Mammary epithelial cell (primary cell): ENCODE measurements at regions of chr4 and their contacts with region 1.

Region 1: DNA sequence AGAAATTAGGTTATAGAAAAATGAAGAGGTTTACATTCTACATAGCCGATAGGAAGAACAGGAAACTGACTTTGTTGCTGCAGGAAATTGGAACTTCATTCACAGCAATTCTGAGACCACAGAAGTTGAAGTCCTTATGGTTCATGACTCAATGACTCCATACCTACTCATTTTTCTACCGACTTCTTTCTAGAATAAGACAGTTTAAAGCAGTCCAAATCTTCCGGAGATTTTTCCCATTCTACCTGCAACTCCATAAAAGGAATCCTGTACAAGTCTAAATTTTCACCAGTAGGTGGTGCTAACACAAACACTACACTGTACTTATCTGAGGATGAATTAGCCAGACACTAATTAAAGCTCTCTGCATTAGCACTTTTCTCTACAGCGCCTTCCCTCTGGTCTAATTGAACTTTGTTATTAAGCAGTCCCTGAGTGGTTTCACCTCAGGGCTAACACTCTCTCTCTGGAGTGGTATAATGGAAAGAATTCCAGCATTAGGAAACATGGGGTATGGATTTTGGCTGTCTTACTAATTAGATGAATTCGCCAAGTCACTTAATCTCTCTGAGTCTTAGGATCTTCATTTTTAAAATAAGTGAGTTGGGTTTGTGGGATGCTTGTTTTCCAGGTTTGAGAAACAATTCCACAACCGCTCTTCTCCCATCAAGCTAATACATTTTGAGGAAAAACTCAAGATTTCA is 167.9 kb downstream of the SMIM20 start:
- DNase-seq: peak; percentile 38
- H3K4me3 ChIP-seq: no peak overlapping the region
- H3K27ac ChIP-seq: no peak overlapping the region
- H3K4me1 ChIP-seq: peaks cover 17% of the 10 kb centered on the region
- H3K27me3 ChIP-seq: peaks cover 8% of the 10 kb centered on the region
- CTCF ChIP-seq: peak; percentile 64 to 65

Region 2: GRCh38 chr4:26126143-26126718 is 44.3 kb after region 1 on chr4:
- CTCF ChIA-PET with region 1: no interaction called
- dilution Hi-C with region 1: no loop called
- in situ Hi-C with region 1: no loop called
- intact Hi-C with region 1: loop called (anchors 5 kb)
- DNase-seq: no peak
- H3K4me3 ChIP-seq: no peak overlapping the region
- H3K27ac ChIP-seq: no peak overlapping the region
- H3K4me1 ChIP-seq: peaks cover 15% of the 10 kb centered on the region
- H3K27me3 ChIP-seq: no peaks in the 10 kb centered on the region
- CTCF ChIP-seq: no peak

Region 3: GRCh38 chr4:26235500-26235899 is 153.6 kb after region 1 on chr4:
- CTCF ChIA-PET with region 1: no interaction called
- dilution Hi-C with region 1: no loop called
- in situ Hi-C with region 1: no loop called
- intact Hi-C with region 1: loop called (anchors 5 kb)
- DNase-seq: peak; percentile 49
- H3K4me3 ChIP-seq: no peak overlapping the region
- H3K27ac ChIP-seq: no peak overlapping the region
- H3K4me1 ChIP-seq: no peaks in the 10 kb centered on the region
- H3K27me3 ChIP-seq: peaks cover 6% of the 10 kb centered on the region
- CTCF ChIP-seq: peak in 1 of 2 donors; percentile 32

Region 4: DNA sequence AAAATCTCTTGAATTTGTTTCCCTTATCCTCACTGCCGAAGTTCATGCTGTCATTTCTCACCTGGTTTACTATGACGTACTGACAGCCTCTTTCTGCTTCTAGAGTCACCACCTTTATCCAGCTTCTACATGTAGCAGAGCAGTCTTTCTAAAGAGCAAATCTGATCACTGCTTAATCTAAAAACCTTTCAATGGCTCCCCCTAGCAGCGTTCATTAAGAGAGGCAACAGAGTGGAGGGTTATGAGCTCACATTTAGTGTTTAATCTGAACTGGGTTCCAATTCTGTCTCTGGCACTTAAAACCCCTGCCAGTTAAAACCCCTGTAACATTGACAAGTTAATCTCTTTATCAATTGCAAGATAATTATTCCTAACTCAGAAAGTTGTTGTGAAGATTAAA is 243.2 kb after region 1 on chr4:
- CTCF ChIA-PET with region 1: interaction called, 5 read pairs
- dilution Hi-C with region 1: no loop called
- in situ Hi-C with region 1: loop called (anchors 5 kb)
- intact Hi-C with region 1: loop called (anchors 1 kb)
- DNase-seq: peak; percentile 35
- H3K4me3 ChIP-seq: no peak overlapping the region
- H3K27ac ChIP-seq: no peak overlapping the region
- H3K4me1 ChIP-seq: peaks cover 21% of the 10 kb centered on the region
- H3K27me3 ChIP-seq: no peaks in the 10 kb centered on the region
- CTCF ChIP-seq: peak in 1 of 2 donors; percentile 65

Region 5: DNA sequence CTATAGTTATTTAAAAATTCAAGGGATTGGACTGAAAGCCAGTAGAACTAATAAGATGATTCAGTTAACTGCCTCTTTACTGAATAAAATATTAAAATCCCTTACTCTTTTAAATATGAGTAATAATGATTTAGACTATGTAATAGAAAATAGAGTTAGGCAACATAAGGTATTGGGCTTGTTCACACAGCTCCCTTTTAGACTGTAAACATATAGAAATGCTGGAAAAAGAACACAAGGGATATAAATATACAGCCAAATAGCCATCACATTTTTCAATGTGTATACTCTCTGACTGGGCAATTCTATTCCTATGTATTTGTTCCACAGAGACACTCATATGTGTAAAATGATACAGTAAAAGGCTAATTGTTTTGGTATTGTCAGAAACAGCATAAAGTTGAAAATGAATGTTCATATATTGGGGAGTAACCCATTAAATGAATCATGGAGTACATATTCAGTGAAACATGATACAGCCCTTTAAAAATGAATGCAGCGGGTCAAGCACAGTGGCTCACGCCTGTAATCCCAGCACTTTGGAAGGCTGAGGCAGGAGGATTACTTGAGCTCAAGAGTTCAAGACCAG is 631.7 kb after region 1 on chr4:
- CTCF ChIA-PET with region 1: no interaction called
- dilution Hi-C with region 1: no loop called
- in situ Hi-C with region 1: no loop called
- intact Hi-C with region 1: no loop called
- DNase-seq: peak; percentile 28
- H3K4me3 ChIP-seq: no peak overlapping the region
- H3K27ac ChIP-seq: no peak overlapping the region
- H3K4me1 ChIP-seq: peaks cover 10% of the 10 kb centered on the region
- H3K27me3 ChIP-seq: no peaks in the 10 kb centered on the region
- CTCF ChIP-seq: no peak

Region 6: DNA sequence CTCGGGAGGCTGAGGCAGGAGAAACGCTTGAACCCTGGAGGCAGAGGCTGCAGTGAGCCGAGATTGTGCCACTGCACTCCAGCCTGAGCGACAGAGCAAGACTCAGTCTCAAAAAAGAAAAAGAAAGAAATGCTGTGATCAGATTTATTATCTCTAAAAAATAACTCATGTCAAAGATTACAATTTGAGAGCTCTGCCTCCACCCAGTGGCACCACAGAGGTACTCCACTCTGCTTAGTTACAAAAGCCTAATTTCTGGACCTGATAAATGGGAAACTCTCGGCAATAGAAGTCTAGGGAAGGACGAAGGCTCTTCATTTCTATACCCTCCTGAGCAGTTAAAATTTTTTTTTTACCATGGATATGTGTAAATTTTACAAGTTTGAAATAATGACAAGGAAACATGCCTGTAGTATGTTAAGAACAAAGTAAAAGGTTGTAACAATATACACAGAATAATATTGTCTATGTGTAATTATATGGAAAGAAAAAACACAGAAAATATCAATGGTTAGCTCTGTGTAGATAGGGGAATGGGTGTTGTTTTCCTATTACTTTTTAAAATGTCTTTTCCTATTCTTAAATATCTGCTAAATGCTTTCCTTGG is 928.5 kb after region 1 on chr4:
- CTCF ChIA-PET with region 1: no interaction called
- dilution Hi-C with region 1: no loop called
- in situ Hi-C with region 1: no loop called
- intact Hi-C with region 1: loop called (anchors 10 kb)
- DNase-seq: peak; percentile 32
- H3K4me3 ChIP-seq: no peak overlapping the region
- H3K27ac ChIP-seq: no peak overlapping the region
- H3K4me1 ChIP-seq: peaks cover 4% of the 10 kb centered on the region
- H3K27me3 ChIP-seq: no peaks in the 10 kb centered on the region
- CTCF ChIP-seq: peak; percentile 85 to 86